ENCODE measurements at regions of chr6 and their contacts with region 1.

Region 1: GRCh38 chr6:7615611-7616383 is 25.8 kb downstream of the SNRNP48 start:
- DNase-seq: peak in 5 of 9 experiments; percentile 25 to 65 (median 32)
- ATAC-seq: peak; percentile 52
- H3K4me3 ChIP-seq: no peak overlapping the region
- H3K4me3 Mint-ChIP-seq: peak overlapping the region; percentile 8
- H3K27ac ChIP-seq: no peak overlapping the region
- H3K27ac Mint-ChIP-seq: peak overlapping the region; percentile 0
- H3K4me1 ChIP-seq: peaks cover 7% of the 10 kb centered on the region
- H3K4me1 Mint-ChIP-seq: peaks cover 11% of the 10 kb centered on the region
- H3K27me3 ChIP-seq: no peaks in the 10 kb centered on the region
- H3K27me3 Mint-ChIP-seq: peaks cover 2% of the 10 kb centered on the region
- CTCF ChIP-seq: peak; percentile 85

Region 2: GRCh38 chr6:6057424-6058053 is 1558.3 kb before region 1 on chr6:
- CTCF ChIA-PET with region 1: no interaction called
- POLR2A ChIA-PET with region 1: no interaction called
- intact Hi-C with region 1: loop called in 1 of 2 experiments (anchors 10 kb)
- DNase-seq: peak in 2 of 9 experiments; percentile 46 to 68
- ATAC-seq: no peak
- H3K4me3 ChIP-seq: no peak overlapping the region
- H3K4me3 Mint-ChIP-seq: no peak overlapping the region
- H3K27ac ChIP-seq: no peak overlapping the region
- H3K27ac Mint-ChIP-seq: no peak overlapping the region
- H3K4me1 ChIP-seq: no peaks in the 10 kb centered on the region
- H3K4me1 Mint-ChIP-seq: no peaks in the 10 kb centered on the region
- H3K27me3 ChIP-seq: no peaks in the 10 kb centered on the region
- H3K27me3 Mint-ChIP-seq: peaks cover 43% of the 10 kb centered on the region
- CTCF ChIP-seq: no peak

Region 3: GRCh38 chr6:6724539-6725467 is 891.0 kb before region 1 on chr6:
- CTCF ChIA-PET with region 1: interaction called, 6 read pairs
- POLR2A ChIA-PET with region 1: no interaction called
- intact Hi-C with region 1: loop called in 1 of 2 experiments (anchors 5 kb)
- DNase-seq: peak; percentile 14 to 73 (median 52)
- ATAC-seq: peak; percentile 77
- H3K4me3 ChIP-seq: peak overlapping the region; percentile 29 to 38
- H3K4me3 Mint-ChIP-seq: peak overlapping the region; percentile 74
- H3K27ac ChIP-seq: no peak overlapping the region
- H3K27ac Mint-ChIP-seq: no peak overlapping the region
- H3K4me1 ChIP-seq: peaks cover 11% of the 10 kb centered on the region
- H3K4me1 Mint-ChIP-seq: peaks cover 6% of the 10 kb centered on the region
- H3K27me3 ChIP-seq: no peaks in the 10 kb centered on the region
- H3K27me3 Mint-ChIP-seq: peaks cover 8% of the 10 kb centered on the region
- CTCF ChIP-seq: peak; percentile 63

Region 4: DNA sequence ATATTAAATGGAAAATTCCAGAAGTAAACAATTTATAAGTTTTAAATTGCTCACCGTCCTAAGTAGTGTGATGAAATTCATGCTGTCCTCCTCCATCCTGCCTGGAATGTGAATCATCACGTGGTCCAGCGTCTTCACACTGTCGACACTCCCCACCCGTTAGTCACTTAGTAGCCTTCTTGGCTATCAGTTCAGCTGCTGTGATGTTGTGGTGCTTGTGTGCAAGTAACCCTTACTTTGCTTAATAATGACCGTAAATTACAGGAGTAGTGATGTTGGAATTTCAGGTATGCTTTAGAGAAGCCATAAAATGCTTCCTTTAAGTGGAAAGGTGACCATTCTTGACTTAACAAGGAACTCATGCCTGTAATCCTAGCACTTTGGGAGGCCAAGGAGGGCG is 201.0 kb before region 1 on chr6:
- CTCF ChIA-PET with region 1: interaction called, 3 read pairs
- POLR2A ChIA-PET with region 1: no interaction called
- intact Hi-C with region 1: loop called in 1 of 2 experiments (anchors 5 kb)
- DNase-seq: no peak
- ATAC-seq: no peak
- H3K4me3 ChIP-seq: no peak overlapping the region
- H3K4me3 Mint-ChIP-seq: no peak overlapping the region
- H3K27ac ChIP-seq: no peak overlapping the region
- H3K27ac Mint-ChIP-seq: no peak overlapping the region
- H3K4me1 ChIP-seq: no peaks in the 10 kb centered on the region
- H3K4me1 Mint-ChIP-seq: no peaks in the 10 kb centered on the region
- H3K27me3 ChIP-seq: no peaks in the 10 kb centered on the region
- H3K27me3 Mint-ChIP-seq: no peaks in the 10 kb centered on the region
- CTCF ChIP-seq: no peak

Region 5: GRCh38 chr6:7640607-7641577 is 25.1 kb after region 1 on chr6:
- CTCF ChIA-PET with region 1: no interaction called
- POLR2A ChIA-PET with region 1: no interaction called
- intact Hi-C with region 1: no loop called
- DNase-seq: no peak
- ATAC-seq: no peak
- H3K4me3 ChIP-seq: no peak overlapping the region
- H3K4me3 Mint-ChIP-seq: no peak overlapping the region
- H3K27ac ChIP-seq: no peak overlapping the region
- H3K27ac Mint-ChIP-seq: no peak overlapping the region
- H3K4me1 ChIP-seq: no peaks in the 10 kb centered on the region
- H3K4me1 Mint-ChIP-seq: no peaks in the 10 kb centered on the region
- H3K27me3 ChIP-seq: no peaks in the 10 kb centered on the region
- H3K27me3 Mint-ChIP-seq: no peaks in the 10 kb centered on the region
- CTCF ChIP-seq: no peak

Measured in CD8-positive, alpha-beta T cell (primary cell).